Mammary epithelial cell (primary cell): ENCODE measurements at regions of chr2 and their contacts with region 1.

Region 1: DNA sequence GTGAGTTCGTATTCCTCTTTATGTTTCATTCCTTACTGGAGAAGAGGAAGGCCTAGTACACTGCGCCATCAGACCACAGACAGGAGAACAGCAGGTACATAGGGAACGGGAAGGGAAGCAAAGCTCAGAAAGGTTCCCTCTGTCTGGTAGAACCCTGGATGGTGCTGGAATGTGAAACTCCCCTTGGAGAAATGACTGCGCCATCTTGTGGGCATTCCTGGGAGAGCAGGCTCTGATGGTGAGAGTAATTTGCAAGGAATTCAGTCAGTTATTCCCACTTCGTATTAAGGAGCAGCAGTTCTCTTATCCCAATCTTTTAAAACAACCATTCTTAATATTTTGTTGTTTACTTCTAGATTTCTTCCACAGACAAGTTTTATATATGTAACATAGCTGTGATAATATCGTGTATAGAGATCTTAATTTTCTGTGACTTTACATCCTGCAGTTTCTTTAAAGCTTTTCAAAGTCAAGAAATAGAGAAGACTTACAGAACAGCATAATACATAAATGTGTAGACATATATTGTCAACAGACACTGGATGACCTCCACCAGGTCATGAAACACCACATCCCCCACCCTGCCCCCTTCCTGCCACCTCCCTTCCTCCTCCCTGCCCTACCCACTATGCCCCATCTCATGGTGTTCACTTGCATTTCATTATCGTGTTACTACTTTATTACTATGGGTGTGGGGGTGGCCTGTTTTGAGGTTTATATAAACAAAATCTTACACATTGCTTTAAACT is 83.9 kb downstream of the ARHGEF4 start:
- DNase-seq: peak; percentile 61
- H3K4me3 ChIP-seq: no peak overlapping the region
- H3K27ac ChIP-seq: no peak overlapping the region
- H3K4me1 ChIP-seq: peaks cover 4% of the 10 kb centered on the region
- H3K27me3 ChIP-seq: no peaks in the 10 kb centered on the region
- CTCF ChIP-seq: peak; percentile 94 to 95

Region 2: DNA sequence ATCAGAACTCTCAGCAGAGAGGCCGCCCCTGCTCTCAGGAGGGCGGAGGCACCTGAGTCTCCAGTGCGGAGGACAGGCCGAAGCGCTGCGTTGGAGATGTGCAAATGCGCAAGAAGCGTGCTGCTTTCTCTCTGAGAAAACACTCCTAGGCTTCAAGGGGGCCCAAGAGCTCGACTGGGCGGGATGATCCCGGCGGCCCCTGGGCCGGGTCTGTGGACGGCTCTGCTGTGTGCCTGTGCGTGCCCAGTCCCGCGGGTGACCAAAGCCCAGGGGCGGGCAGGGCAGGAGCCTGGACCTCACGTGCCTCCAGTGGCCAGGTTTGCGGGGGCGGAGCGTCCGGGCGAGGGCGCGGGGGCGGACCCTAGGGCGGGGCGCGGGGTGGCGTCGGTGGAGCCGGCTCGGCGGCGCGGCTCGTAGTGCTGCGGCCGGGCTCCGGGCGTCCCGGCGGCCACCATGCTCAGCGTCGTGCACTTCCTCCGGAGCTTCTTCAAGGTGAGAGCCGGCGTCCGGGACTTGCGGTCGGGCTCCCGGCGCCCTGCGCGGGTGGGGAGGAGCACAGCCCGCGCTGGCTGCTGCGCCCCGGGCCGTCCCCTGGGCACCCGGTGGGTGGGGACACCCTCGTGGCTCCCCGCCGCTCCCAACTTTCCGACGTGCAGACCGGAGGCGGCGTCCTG is 84.0 kb before region 1 on chr2 and contains the start of gene ARHGEF4:
- CTCF ChIA-PET with region 1: interaction called, 3 read pairs
- dilution Hi-C with region 1: no loop called
- in situ Hi-C with region 1: no loop called
- intact Hi-C with region 1: loop called (anchors 1 kb)
- DNase-seq: peak; percentile 59
- H3K4me3 ChIP-seq: peak within 1 kb of the TSS; percentile 66 to 82 (median 73)
- H3K27ac ChIP-seq: peak within 1 kb of the TSS; percentile 40
- H3K4me1 ChIP-seq: peaks cover 6% of the 10 kb centered on the region
- H3K27me3 ChIP-seq: no peaks in the 10 kb centered on the region
- CTCF ChIP-seq: no peak
- total RNA-seq, gene ARHGEF4: 48.8 to 70.3 TPM

Region 3: DNA sequence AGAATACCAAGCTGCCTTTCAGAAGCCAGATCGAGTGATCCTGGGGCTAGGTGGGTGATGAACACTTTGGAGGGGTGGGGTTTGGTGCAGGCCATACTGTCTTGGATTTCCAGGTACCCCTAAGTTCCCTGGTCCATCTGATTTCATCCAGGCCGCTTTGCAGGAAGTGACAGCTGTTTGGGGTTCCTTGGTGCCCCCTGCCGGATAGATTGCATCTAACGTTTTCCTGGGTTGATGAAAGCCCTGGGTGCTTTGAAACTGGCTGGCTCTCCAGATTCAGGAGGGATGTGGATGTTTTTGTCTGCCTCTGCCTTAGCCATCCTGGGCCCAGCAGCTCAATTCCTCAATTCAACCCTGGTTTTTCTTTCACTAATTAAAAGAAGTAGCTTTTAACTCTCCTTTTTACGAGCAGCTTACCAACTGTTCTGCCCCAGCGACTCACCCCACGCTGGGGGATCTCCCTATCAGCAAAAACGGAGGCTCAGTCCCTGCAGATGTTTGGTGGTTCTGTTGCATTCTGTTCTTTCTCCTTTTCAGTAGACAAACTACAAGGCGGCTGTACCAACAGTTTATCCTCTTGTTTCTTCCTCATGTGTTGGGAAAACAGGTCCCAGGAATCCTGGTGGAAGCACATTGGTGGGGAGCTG is 46.8 kb before region 1 on chr2:
- CTCF ChIA-PET with region 1: interaction called, 7 read pairs
- dilution Hi-C with region 1: no loop called
- in situ Hi-C with region 1: no loop called
- intact Hi-C with region 1: loop called (anchors 1 kb)
- DNase-seq: peak; percentile 53
- H3K4me3 ChIP-seq: no peak overlapping the region
- H3K27ac ChIP-seq: no peak overlapping the region
- H3K4me1 ChIP-seq: peaks cover 18% of the 10 kb centered on the region
- H3K27me3 ChIP-seq: no peaks in the 10 kb centered on the region
- CTCF ChIP-seq: peak; percentile 77 to 81

Region 4: DNA sequence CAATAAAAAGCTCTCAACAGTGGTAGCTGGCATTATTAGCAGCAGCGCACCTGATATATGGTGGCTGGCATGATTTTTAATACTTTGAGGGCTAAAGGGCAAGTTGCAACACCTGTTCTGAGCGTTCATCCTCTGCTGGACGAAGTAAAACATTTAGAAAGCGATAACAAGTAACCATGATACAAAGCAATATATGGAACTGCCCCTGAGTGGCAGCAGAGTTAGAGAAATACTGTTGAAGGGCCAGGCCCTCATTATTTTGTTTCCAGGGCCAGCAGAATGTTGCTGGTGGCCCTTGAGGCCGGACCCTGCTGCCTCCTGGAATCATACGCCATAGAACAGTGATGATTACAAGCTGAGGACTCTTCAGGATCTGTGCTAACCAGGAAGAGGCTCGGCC is 36.1 kb before region 1 on chr2:
- CTCF ChIA-PET with region 1: no interaction called
- dilution Hi-C with region 1: no loop called
- in situ Hi-C with region 1: no loop called
- intact Hi-C with region 1: loop called (anchors 1 kb)
- DNase-seq: no peak
- H3K4me3 ChIP-seq: no peak overlapping the region
- H3K27ac ChIP-seq: no peak overlapping the region
- H3K4me1 ChIP-seq: peaks cover 36% of the 10 kb centered on the region
- H3K27me3 ChIP-seq: no peaks in the 10 kb centered on the region
- CTCF ChIP-seq: peak in 1 of 2 donors; percentile 31

Region 5: DNA sequence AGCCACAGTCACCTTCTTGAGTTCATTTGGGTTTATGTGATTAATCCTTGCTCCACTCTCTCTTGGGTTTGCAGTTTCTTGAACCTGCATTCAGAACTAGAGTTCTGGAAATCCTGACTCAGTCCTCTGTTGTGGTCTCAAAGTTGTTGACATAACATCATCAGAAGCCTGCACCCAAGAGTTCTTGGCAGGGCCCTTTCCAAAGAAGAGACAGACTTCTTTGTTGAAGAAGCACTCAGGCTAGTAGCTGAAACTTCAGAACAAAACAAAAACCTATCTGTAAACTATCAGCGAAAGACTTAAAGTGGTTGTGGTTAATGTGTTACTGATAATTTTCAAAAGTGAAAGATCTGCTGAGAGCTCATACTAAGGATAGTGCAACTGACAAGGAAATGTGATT is 51.8 kb after region 1 on chr2:
- CTCF ChIA-PET with region 1: no interaction called
- dilution Hi-C with region 1: no loop called
- in situ Hi-C with region 1: no loop called
- intact Hi-C with region 1: no loop called
- DNase-seq: peak; percentile 88
- H3K4me3 ChIP-seq: no peak overlapping the region
- H3K27ac ChIP-seq: no peak overlapping the region
- H3K4me1 ChIP-seq: no peaks in the 10 kb centered on the region
- H3K27me3 ChIP-seq: no peaks in the 10 kb centered on the region
- CTCF ChIP-seq: no peak

Region 6: DNA sequence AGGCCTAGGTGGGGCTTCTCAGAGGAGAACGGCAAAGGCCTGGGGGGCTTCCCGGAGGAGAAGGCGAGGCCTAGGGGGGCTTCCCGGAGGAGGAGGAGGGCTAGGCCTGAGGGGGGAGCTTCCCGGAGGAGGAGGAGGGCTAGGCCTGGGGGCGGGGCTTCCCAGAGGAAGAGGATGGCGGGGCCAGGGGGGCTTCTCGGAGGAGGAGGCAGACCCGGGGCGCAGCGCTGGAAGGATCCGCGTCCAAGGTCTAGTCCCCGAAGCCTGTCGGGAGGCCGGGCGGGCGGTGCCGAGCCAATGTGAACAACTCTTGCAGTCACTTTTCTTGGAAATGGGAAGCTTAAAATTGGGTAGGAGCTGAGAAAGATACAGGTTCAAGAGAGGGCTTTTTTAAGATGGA is 525.3 kb after region 1 on chr2:
- CTCF ChIA-PET with region 1: no interaction called
- dilution Hi-C with region 1: no loop called
- in situ Hi-C with region 1: no loop called
- intact Hi-C with region 1: no loop called
- DNase-seq: no peak
- H3K4me3 ChIP-seq: no peak overlapping the region
- H3K27ac ChIP-seq: no peak overlapping the region
- H3K4me1 ChIP-seq: no peaks in the 10 kb centered on the region
- H3K27me3 ChIP-seq: no peaks in the 10 kb centered on the region
- CTCF ChIP-seq: no peak